MCF 10A (cell line): ENCODE measurements at regions of chr18 and their contacts with region 1.

Region 1: DNA sequence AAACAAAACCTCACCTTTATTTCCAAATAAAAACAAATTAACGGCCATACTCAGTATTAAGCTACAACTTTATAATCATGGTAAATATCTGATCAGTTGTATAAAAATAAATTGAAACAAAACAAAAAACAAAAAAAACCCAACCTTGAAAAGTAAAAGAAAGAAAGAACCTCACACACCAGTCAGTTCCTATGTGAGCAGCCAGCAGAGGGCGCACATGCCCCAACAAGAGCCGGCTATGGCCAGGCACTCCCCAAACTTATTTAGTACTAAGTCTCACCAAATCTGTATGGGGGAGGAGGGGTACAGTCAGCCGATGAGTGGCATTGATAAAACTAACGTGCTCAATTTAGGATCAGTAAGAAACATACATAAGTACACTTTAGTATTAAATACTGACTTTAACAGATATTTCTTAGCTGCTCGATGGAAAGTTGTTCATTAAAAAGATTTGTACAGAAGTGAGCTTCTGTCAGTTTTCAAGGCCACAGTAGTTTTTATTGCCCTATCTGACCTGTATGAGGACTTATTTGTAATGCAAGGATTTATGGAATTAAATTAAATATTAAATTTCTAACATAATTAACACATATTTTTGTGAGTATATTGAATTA is 172.6 kb downstream of the TCF4 start:
- DNase-seq: peak; percentile 80
- H3K4me3 Mint-ChIP-seq: no peak overlapping the region
- H3K27ac Mint-ChIP-seq: no peak overlapping the region
- H3K4me1 Mint-ChIP-seq: peaks cover 5% of the 10 kb centered on the region
- H3K27me3 Mint-ChIP-seq: no peaks in the 10 kb centered on the region
- CTCF ChIP-seq: peak; percentile 91

Region 2: DNA sequence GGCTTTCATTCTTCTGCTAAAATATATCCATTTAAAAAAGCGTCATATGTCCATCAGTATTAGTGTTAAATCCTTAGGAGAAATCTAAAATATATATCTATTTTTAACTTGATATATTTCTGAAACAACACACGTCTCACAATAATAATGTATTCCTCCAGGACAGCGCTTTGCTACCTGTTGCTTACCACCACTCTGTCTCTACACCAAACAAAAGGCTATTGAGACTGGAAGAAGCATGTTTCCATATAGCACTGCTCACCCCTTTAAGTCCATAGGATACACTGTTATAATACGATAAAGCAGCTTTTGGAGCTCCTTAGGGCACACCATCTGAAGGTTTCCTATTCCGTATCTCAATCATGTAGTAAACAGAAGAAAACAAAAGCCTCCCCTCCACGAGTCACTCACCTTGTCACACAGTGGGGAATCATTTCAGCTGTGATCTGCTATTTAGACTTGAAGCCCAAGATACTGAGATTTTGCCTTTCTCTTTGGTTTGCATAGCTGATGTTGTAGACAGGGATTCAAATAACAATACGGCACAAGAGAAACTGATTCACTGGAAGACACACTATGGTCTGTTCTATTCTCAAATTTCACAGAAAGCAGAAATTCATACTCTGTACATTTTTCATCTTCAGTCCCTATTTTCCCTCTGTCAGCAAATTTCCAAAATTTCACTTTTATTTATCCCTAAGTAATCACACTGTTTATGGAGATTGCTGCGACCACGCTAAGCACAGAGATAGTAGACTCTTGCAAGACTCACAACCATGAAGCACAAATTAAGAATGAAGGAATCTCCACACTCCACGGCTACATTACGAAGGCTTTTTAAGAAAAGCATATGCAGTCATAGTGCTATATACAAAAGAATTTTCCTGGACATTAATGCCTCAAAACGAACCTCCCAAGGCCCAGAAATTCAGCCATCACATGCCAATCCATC is 14.5 kb before region 1 on chr18:
- CTCF ChIA-PET with region 1: interaction called, 18 read pairs
- POLR2A ChIA-PET with region 1: interaction called, 4 read pairs
- intact Hi-C with region 1: no loop called
- DNase-seq: no peak
- H3K4me3 Mint-ChIP-seq: no peak overlapping the region
- H3K27ac Mint-ChIP-seq: no peak overlapping the region
- H3K4me1 Mint-ChIP-seq: peaks cover 9% of the 10 kb centered on the region
- H3K27me3 Mint-ChIP-seq: no peaks in the 10 kb centered on the region
- CTCF ChIP-seq: no peak

Region 3: GRCh38 chr18:55439056-55439455 is 23.7 kb after region 1 on chr18:
- CTCF ChIA-PET with region 1: interaction called, 15 read pairs
- POLR2A ChIA-PET with region 1: interaction called, 3 read pairs
- intact Hi-C with region 1: no loop called
- DNase-seq: no peak
- H3K4me3 Mint-ChIP-seq: no peak overlapping the region
- H3K27ac Mint-ChIP-seq: no peak overlapping the region
- H3K4me1 Mint-ChIP-seq: no peaks in the 10 kb centered on the region
- H3K27me3 Mint-ChIP-seq: no peaks in the 10 kb centered on the region
- CTCF ChIP-seq: no peak

Region 4: DNA sequence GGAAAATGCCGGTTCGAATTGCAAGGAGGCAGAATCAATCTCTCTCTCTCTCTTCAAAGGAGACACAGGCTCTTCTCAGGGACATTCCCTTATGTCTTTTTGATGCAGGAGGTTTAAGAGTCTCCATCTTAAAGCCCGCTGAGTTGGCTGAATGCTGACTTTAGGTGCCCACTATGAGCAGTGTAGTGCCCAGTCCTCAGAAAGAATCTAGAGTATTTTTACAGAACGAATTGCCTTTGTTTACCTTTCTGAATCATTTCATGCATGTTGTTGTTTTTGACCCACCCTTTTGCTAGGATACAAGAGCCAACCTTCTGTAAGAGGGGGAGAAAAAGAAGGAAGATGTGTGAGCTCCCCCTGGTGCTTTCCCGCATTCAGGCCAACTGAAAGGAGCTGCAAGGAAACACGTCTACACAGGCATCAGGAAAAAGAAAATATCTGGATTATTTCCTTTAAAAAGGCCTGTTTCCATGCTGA is 366.2 kb after region 1 on chr18:
- CTCF ChIA-PET with region 1: interaction called, 13 read pairs
- POLR2A ChIA-PET with region 1: interaction called, 3 read pairs
- intact Hi-C with region 1: loop called (anchors 1 kb)
- DNase-seq: peak; percentile 48
- H3K4me3 Mint-ChIP-seq: no peak overlapping the region
- H3K27ac Mint-ChIP-seq: no peak overlapping the region
- H3K4me1 Mint-ChIP-seq: no peaks in the 10 kb centered on the region
- H3K27me3 Mint-ChIP-seq: no peaks in the 10 kb centered on the region
- CTCF ChIP-seq: peak; percentile 14

Region 5: DNA sequence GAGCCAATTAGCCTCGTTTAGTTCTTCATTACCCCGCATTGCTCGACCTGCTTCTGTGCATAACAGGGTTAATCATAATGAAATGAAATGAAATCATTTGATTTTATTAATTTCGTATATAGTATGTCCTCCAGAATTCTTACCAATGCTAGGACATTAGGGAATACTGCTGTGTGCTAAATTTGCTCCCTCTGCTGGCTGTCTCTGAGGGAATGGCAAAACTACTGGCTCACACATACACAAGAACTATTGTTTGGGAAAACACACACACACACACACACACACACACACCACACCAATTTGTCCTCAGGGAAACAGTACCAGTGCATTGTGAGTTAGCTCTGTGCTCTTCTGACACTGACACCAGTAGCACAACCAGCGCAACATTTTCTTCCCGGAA is 445.9 kb after region 1 on chr18:
- CTCF ChIA-PET with region 1: interaction called, 14 read pairs
- POLR2A ChIA-PET with region 1: no interaction called
- intact Hi-C with region 1: loop called (anchors 1 kb)
- DNase-seq: peak; percentile 55
- H3K4me3 Mint-ChIP-seq: no peak overlapping the region
- H3K27ac Mint-ChIP-seq: no peak overlapping the region
- H3K4me1 Mint-ChIP-seq: peaks cover 23% of the 10 kb centered on the region
- H3K27me3 Mint-ChIP-seq: no peaks in the 10 kb centered on the region
- CTCF ChIP-seq: peak; percentile 37

Region 6: GRCh38 chr18:56575819-56576663 is 1160.7 kb after region 1 on chr18:
- CTCF ChIA-PET with region 1: interaction called, 34 read pairs
- POLR2A ChIA-PET with region 1: interaction called, 3 read pairs
- intact Hi-C with region 1: loop called (anchors 1 kb)
- DNase-seq: peak; percentile 68
- H3K4me3 Mint-ChIP-seq: no peak overlapping the region
- H3K27ac Mint-ChIP-seq: no peak overlapping the region
- H3K4me1 Mint-ChIP-seq: no peaks in the 10 kb centered on the region
- H3K27me3 Mint-ChIP-seq: no peaks in the 10 kb centered on the region
- CTCF ChIP-seq: peak; percentile 60